IMR-90 (cell line): ENCODE measurements at regions of chr5 and their contacts with region 1.

Region 1: GRCh38 chr5:77437194-77437593 is 54.9 kb downstream of the WDR41 start:
- DNase-seq: no peak
- ATAC-seq: no peak
- H3K4me3 ChIP-seq: no peak overlapping the region
- H3K27ac ChIP-seq: no peak overlapping the region
- H3K4me1 ChIP-seq: 0 out of 2 replicates have a peak, but pooled peaks cover 1% of the 10 kb centered on the region
- H3K27me3 ChIP-seq: no peaks in the 10 kb centered on the region
- CTCF ChIP-seq: no peak
- POLR2A ChIP-seq: no peak
- RAD21 ChIP-seq: no peak; the same call in 1 of the 2 replicates

Region 2: DNA sequence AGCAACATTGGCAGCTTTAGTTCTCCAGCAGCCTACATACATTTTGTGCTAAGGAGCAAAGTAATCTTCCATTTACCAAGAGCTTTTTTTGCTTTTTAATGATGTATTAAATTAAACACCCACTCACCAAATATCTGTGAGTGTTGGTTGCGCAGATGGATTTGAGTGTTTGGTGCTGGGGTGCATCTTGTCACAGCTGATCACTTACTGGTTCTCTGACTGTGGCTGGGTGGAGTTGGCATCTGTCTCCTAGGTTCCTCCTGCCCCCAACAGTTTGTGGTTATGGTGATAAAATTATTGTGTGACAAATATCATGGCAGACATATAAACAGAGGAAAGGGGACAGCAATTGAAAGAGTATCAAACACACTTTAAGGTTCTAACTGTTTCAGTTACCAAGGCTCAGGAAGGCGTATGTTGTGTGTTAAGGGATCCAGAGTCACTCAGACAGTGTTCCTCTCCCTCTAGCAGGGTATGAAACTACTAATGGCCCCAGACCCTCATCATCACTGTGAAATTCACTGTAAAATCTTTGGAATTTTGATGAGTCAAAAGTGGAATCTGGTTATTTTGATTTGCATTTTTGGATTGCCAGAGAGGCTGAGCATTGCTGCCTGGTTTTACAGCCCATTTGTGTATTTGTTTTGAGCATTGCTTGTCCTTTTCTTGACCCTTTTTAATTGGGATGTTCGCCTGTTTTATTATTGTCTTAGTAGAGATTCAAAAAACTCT is 145.0 kb before region 1 on chr5:
- CTCF ChIA-PET with region 1: no interaction called
- POLR2A ChIA-PET with region 1: no interaction called
- dilution Hi-C with region 1: no loop called
- in situ Hi-C with region 1: no loop called
- intact Hi-C with region 1: loop called (anchors 10 kb)
- DNase-seq: peak; percentile 68
- ATAC-seq: peak; percentile 97
- H3K4me3 ChIP-seq: no peak overlapping the region
- H3K27ac ChIP-seq: peak overlapping the region; percentile 79
- H3K4me1 ChIP-seq: peaks cover 7% of the 10 kb centered on the region
- H3K27me3 ChIP-seq: no peaks in the 10 kb centered on the region
- CTCF ChIP-seq: no peak
- POLR2A ChIP-seq: no peak
- RAD21 ChIP-seq: no peak